GM12878 (cell line): ENCODE measurements at regions of chr13 and their contacts with region 1.

Region 1: DNA sequence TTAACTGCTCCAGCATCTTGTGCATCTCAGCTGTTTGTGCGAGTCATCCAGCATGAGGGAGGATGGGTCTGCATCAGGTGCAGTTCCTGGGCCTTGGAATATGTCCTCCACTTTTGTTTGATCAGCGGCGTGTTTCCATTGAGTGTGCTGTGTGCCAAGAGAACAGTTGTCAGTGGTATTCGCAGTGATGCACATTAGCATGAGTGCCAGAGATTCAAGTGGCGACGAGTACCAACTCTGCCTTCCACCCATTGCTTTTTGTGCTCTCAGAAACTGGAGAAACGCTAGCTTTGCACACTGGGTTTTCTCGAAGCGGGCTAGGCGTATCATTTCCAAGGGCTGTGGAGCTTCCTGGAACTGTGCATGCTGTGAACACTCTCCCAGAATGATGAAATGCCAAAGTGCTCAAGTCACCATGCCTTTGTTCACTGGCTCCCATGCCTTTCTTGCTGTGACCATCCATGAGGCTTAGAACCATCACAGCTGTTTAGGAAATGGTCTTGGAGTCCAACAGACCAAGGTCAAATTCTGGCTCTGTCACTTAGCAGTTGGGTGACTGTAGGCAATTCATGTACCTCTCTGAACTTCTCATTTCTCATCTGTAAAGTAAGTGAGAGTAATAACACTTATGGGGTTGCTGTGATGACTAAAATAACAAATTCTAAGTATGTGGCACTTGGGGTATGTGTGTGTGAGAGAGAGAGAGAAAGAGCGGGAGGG is 18.4 kb downstream of the LRCH1 start:
- DNase-seq: no peak
- ATAC-seq: peak; percentile 73
- H3K4me3 ChIP-seq: peak overlapping the region; percentile 20; the same call in 1 of the 2 replicates
- H3K27ac ChIP-seq: peak overlapping the region; percentile 78
- H3K4me1 ChIP-seq: peaks cover 53% of the 10 kb centered on the region
- H3K27me3 ChIP-seq: no peaks in the 10 kb centered on the region
- CTCF ChIP-seq: no peak
- EP300 ChIP-seq: no peak
- POLR2A ChIP-seq: no peak
- RAD21 ChIP-seq: no peak

Region 2: GRCh38 chr13:46176756-46177155 is 394.6 kb before region 1 on chr13:
- CTCF ChIA-PET with region 1: no interaction called
- POLR2A ChIA-PET with region 1: no interaction called
- RAD21 ChIA-PET with region 1: no interaction called
- SMC1A ChIA-PET with region 1: no interaction called
- in situ Hi-C with region 1: no loop called
- intact Hi-C with region 1: loop called (anchors 10 kb)
- DNase-seq: peak; percentile 79
- ATAC-seq: peak; percentile 35
- H3K4me3 ChIP-seq: peak overlapping the region; percentile 72
- H3K27ac ChIP-seq: peak overlapping the region; percentile 99
- H3K4me1 ChIP-seq: peaks cover 15% of the 10 kb centered on the region
- H3K27me3 ChIP-seq: no peaks in the 10 kb centered on the region
- CTCF ChIP-seq: no peak
- EP300 ChIP-seq: peak; percentile 48 to 52; a peak in 1 of 4 replicates
- POLR2A ChIP-seq: no peak
- RAD21 ChIP-seq: no peak

Region 3: GRCh38 chr13:46403851-46404732 is 167.3 kb before region 1 on chr13:
- CTCF ChIA-PET with region 1: no interaction called
- POLR2A ChIA-PET with region 1: no interaction called
- RAD21 ChIA-PET with region 1: no interaction called
- SMC1A ChIA-PET with region 1: no interaction called
- in situ Hi-C with region 1: no loop called
- intact Hi-C with region 1: no loop called
- DNase-seq: no peak
- ATAC-seq: no peak
- H3K4me3 ChIP-seq: no peak overlapping the region
- H3K27ac ChIP-seq: no peak overlapping the region
- H3K4me1 ChIP-seq: no peaks in the 10 kb centered on the region; the same call in 1 of the 2 replicates
- H3K27me3 ChIP-seq: no peaks in the 10 kb centered on the region
- CTCF ChIP-seq: no peak
- EP300 ChIP-seq: no peak
- POLR2A ChIP-seq: no peak
- RAD21 ChIP-seq: no peak

Region 4: DNA sequence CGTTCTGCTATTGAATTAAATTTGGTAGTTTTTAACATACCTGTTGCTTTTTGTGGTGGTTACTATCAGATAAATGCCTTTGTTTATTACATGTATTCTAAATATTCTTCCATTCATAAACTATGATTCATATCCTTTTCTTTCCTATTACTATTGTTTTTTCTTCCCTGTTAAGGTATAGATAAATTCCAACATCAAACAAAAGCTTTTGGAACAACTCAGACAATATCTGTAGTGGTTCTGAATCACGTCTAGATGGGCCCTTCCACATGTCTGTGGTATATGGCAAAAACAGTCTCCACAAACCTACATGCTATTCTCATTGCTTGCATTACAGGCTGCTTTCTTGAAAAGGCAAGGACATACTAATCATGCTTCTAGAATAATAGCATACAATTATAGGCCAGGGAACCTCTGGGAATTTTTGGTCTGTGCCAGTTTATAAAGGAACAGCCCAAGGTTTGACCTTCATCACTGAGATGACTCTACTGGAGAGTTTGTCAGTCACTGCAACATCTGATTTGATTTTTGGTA is 12.0 kb before region 1 on chr13:
- CTCF ChIA-PET with region 1: interaction called, 14 read pairs
- POLR2A ChIA-PET with region 1: interaction called, 24 read pairs
- RAD21 ChIA-PET with region 1: interaction called, 73 read pairs
- SMC1A ChIA-PET with region 1: interaction called, 124 read pairs
- in situ Hi-C with region 1: no loop called
- intact Hi-C with region 1: no loop called
- DNase-seq: no peak
- ATAC-seq: no peak
- H3K4me3 ChIP-seq: no peak overlapping the region; the same call in 1 of the 2 replicates
- H3K27ac ChIP-seq: no peak overlapping the region
- H3K4me1 ChIP-seq: peaks cover 10% of the 10 kb centered on the region
- H3K27me3 ChIP-seq: no peaks in the 10 kb centered on the region
- CTCF ChIP-seq: no peak
- EP300 ChIP-seq: no peak
- POLR2A ChIP-seq: no peak
- RAD21 ChIP-seq: no peak

Region 5: GRCh38 chr13:46587807-46588418 is 16.6 kb after region 1 on chr13:
- CTCF ChIA-PET with region 1: interaction called, 7 read pairs
- POLR2A ChIA-PET with region 1: interaction called, 9 read pairs
- RAD21 ChIA-PET with region 1: interaction called, 97 read pairs
- SMC1A ChIA-PET with region 1: interaction called, 188 read pairs
- in situ Hi-C with region 1: no loop called
- intact Hi-C with region 1: no loop called
- DNase-seq: no peak
- ATAC-seq: peak; percentile 79
- H3K4me3 ChIP-seq: 0 out of 2 replicates have a peak overlapping the region, but pooled peaks have one; percentile 7
- H3K27ac ChIP-seq: peak overlapping the region; percentile 29
- H3K4me1 ChIP-seq: peaks cover 58% of the 10 kb centered on the region
- H3K27me3 ChIP-seq: no peaks in the 10 kb centered on the region
- CTCF ChIP-seq: no peak
- EP300 ChIP-seq: peak in 1 of 2 experiments; percentile 56; a peak in 2 of 4 replicates
- POLR2A ChIP-seq: no peak
- RAD21 ChIP-seq: no peak